ENCODE measurements at regions of chr7 and their contacts with region 1.

Region 1: GRCh38 chr7:101542527-101543241 is 86.4 kb downstream of the MYL10 start:
- DNase-seq: peak; percentile 74 to 76
- H3K4me3 ChIP-seq: no peak overlapping the region
- H3K27ac ChIP-seq: no peak overlapping the region
- H3K4me1 ChIP-seq: peaks cover 0 to 11% of the 10 kb centered on the region in 2 donors
- H3K27me3 ChIP-seq: no peaks in the 10 kb centered on the region
- CTCF ChIP-seq: peak; percentile 87 to 95 (median 94)
- POLR2A ChIP-seq: no peak

Region 2: DNA sequence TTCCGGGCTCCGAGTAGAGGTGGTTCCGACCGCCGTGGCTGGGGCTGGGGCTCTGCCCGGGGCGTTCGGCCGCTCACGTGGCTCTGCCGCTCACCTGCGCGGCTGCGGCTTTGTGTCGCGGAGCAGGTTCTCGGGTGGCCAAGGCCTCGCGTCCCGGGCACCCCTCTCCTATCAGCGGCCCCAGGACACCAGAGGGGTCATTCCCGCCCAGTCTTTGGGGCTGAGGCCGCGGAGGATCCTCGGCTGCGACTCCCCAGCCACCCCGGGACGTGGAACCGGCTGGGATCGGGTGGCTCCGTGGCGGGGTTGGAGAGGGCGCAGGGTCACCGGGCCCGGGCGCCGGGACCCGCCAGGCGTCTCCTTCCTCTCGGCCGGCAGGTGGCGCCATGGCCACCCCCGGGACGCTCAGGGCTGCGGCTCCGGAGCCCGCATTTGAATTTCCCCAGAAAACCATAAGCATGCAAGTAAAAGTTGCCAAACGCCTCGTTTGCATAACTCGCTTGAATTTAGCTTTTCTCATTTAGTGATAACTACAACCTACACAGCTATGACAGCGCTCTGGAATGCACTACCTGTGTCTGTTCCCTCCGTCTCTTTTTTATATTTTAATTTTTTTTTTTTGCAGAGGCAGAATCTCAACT is 178.8 kb before region 1 on chr7:
- intact Hi-C with region 1: loop called (anchors 5 kb)
- DNase-seq: peak; percentile 67 to 68
- H3K4me3 ChIP-seq: peak overlapping the region in 2 of 3 donors; percentile 7 to 39
- H3K27ac ChIP-seq: no peak overlapping the region
- H3K4me1 ChIP-seq: peaks cover 0 to 20% of the 10 kb centered on the region in 2 donors
- H3K27me3 ChIP-seq: no peaks in the 10 kb centered on the region
- CTCF ChIP-seq: peak; percentile 62 to 91 (median 82)
- POLR2A ChIP-seq: no peak

Region 3: GRCh38 chr7:101688183-101688831 is 145.6 kb after region 1 on chr7:
- intact Hi-C with region 1: loop called (anchors 5 kb)
- DNase-seq: peak; percentile 76 to 79
- H3K4me3 ChIP-seq: peak overlapping the region in 1 of 3 donors; percentile 6
- H3K27ac ChIP-seq: no peak overlapping the region
- H3K4me1 ChIP-seq: peaks cover 0 to 22% of the 10 kb centered on the region in 2 donors
- H3K27me3 ChIP-seq: no peaks in the 10 kb centered on the region
- CTCF ChIP-seq: peak; percentile 68 to 99 (median 91)
- POLR2A ChIP-seq: no peak

Region 4: DNA sequence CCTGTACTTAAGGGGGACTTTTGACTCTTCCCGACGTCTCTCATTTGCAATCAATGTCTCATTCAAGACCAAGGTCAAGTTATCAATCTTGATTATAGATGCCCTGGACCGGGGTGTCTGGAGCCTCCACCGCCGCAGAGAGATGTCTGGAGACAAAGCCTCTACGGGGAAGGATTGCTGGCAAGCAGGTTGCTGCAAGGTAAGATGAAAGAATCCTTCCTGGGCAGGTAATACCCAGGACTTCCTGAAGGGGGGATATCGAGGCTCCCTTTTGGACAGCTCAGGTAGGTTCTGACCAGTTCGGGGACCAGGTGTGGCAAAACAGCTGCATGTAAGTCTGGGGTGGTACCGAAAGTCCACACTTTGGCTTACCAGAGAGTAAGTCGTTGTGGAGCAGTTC is 262.3 kb after region 1 on chr7:
- intact Hi-C with region 1: loop called (anchors 10 kb)
- DNase-seq: peak; percentile 35 to 36
- H3K4me3 ChIP-seq: no peak overlapping the region
- H3K27ac ChIP-seq: no peak overlapping the region
- H3K4me1 ChIP-seq: peaks cover 9% of the 10 kb centered on the region in 2 donors
- H3K27me3 ChIP-seq: no peaks in the 10 kb centered on the region
- CTCF ChIP-seq: peak in 5 of 6 experiments; percentile 27 to 63 (median 47)
- POLR2A ChIP-seq: no peak

Region 5: DNA sequence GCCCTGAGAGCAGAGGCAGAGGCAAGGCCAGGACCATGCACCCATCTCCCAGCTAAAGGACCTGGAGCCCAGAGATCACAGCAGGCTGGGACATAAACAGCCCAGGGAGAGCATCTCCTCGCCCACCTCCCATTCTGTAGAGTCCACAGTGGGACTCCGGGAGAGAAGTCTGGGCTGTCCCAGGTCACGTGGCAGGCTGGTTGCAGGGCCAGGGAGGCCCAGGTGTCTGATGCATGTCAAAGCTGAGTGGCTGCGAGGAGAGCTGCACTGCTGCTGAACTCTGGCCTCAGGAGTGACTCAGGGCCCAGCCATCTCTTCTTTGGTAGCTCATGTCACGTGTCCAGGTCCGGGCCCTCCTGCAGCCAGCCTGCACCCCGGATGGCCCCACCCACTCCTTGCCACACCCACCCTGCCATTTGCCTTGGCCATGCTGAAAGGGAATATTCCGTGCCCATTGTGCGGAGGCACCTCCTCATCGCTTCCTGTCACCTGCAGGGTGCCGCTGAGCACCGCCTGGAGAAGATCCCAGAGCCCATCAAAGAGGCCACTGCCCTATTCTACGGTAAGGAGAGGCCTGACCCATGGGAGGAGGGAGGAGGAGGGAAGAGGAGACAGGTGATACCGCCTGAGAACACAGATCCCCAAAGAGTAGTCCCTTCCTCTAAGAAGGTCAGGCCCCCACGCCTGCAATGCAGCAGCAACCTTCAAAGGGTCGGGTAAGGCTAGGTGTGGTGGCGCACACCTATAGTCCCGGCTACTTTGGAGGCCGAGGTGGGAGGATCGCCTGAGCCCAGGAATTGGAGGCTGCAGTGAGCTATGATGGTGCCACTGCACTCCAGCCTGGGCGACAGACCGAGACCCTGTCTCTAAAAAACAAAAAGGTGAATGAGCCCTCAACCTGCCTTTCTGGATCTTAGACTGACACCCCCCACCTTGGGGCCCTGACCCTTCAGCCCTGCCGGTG is 731.3 kb after region 1 on chr7:
- intact Hi-C with region 1: loop called (anchors 1 kb)
- DNase-seq: no peak
- H3K4me3 ChIP-seq: no peak overlapping the region
- H3K27ac ChIP-seq: no peak overlapping the region
- H3K4me1 ChIP-seq: no peaks in the 10 kb centered on the region
- H3K27me3 ChIP-seq: no peaks in the 10 kb centered on the region
- CTCF ChIP-seq: no peak
- POLR2A ChIP-seq: no peak

Region 6: DNA sequence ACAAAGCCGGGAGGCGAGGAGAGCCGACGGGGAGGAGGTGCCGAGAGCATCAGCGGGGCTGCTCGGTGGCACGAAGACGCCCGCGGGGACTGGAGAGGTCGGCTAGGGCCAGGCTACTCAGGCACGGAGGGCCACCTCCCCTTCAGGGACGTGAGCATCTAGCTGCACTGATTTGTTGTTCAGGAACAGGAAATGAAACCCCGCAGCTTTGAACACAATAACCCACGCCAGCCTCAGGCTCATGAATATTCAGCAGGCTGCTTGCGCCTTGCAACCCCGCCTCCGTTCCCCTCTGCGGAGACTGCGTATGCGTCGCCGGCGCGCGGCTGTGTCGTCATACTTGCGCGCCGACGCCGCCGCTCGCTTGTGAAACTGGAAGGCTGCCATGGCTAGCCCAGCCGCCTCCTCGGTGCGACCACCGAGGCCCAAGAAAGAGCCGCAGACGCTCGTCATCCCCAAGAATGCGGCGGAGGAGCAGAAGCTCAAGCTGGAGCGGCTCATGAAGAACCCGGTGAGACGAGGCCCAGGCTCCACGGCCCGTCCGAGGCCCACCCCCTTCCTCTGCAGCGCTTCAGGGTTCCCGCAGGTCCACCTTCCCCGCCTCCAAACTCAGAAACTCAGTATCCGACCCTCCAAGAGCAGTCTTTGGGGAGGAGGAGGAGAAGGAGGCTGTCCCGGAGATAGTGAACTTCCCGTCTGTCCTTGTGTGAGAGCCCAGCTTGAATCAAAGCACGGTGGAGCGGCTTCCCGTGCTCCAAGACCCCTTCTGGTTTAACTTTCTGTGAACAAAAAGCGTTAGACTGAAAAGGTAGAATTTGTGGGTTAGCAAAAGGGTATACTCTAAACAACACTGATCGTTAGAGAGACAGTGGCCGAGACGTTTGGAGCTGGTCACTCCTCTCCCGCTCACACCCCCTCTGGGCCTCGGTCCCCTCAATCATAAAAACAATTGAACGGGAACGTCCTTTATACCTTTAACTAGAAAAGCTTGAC is 853.6 kb after region 1 on chr7 and contains the start of gene PRKRIP1:
- intact Hi-C with region 1: loop called (anchors 10 kb)
- DNase-seq: peak; percentile 89 to 91
- H3K4me3 ChIP-seq: peak within 1 kb of the TSS; percentile 49 to 85 (median 70)
- H3K27ac ChIP-seq: peak within 1 kb of the TSS; percentile 77 to 86 (median 78)
- H3K4me1 ChIP-seq: peaks cover 6 to 7% of the 10 kb centered on the region in 2 donors
- H3K27me3 ChIP-seq: no peaks in the 10 kb centered on the region
- CTCF ChIP-seq: no peak
- POLR2A ChIP-seq: peak in 1 of 2 donors; percentile 72
- total RNA-seq, gene PRKRIP1: 31.8 to 43.7 (median 37.7) TPM